H1 (cell line): ENCODE measurements at regions of chr17 and their contacts with region 1.

Region 1: GRCh38 chr17:38421171-38421841 is 7.0 kb upstream of the ARHGAP23 start:
- DNase-seq: no peak
- H3K4me3 ChIP-seq: peak overlapping the region in 1 of 4 experiments; percentile 4; a peak in 2 of 8 replicates
- H3K27ac ChIP-seq: no peak overlapping the region
- H3K4me1 ChIP-seq: peaks cover 21 to 64% (median 52%) of the 10 kb centered on the region in 4 experiments
- H3K27me3 ChIP-seq: peaks cover 0 to 19% (median 7%) of the 10 kb centered on the region in 4 experiments; a peak in 4 of 7 replicates
- CTCF ChIP-seq: no peak
- EP300 ChIP-seq: no peak
- POLR2A ChIP-seq: no peak
- RAD21 ChIP-seq: no peak

Region 2: GRCh38 chr17:38434178-38434665 is 12.9 kb after region 1 on chr17:
- CTCF ChIA-PET with region 1: interaction called, 204 read pairs
- POLR2A ChIA-PET with region 1: interaction called, 10 read pairs
- DNase-seq: no peak
- H3K4me3 ChIP-seq: no peak overlapping the region
- H3K27ac ChIP-seq: no peak overlapping the region
- H3K4me1 ChIP-seq: peaks cover 9 to 23% (median 14%) of the 10 kb centered on the region in 4 experiments
- H3K27me3 ChIP-seq: no peaks in the 10 kb centered on the region
- CTCF ChIP-seq: no peak
- EP300 ChIP-seq: no peak
- POLR2A ChIP-seq: no peak
- RAD21 ChIP-seq: no peak

Region 3: DNA sequence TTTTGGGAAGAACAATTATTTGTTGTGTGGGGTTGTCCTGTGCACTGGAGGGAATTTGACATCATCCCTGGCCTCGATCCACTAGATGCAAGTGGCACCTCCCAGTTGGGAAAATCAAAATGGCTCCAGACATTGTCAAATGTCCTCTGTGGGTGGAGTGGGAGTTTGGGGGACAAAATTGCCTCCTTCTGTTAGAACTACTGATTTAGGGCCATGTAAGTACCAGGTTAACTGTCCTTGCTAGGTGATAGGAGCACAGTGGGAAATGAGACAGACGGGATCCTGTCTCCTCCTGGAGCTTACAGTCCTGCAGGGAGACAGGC is 63.8 kb after region 1 on chr17:
- CTCF ChIA-PET with region 1: interaction called, 42 read pairs
- POLR2A ChIA-PET with region 1: interaction called, 3 read pairs
- DNase-seq: no peak
- H3K4me3 ChIP-seq: no peak overlapping the region
- H3K27ac ChIP-seq: no peak overlapping the region
- H3K4me1 ChIP-seq: peaks cover 0 to 6% (median 4%) of the 10 kb centered on the region in 4 experiments; a peak in 3 of 7 replicates
- H3K27me3 ChIP-seq: no peaks in the 10 kb centered on the region
- CTCF ChIP-seq: no peak
- EP300 ChIP-seq: no peak
- POLR2A ChIP-seq: no peak
- RAD21 ChIP-seq: no peak

Region 4: DNA sequence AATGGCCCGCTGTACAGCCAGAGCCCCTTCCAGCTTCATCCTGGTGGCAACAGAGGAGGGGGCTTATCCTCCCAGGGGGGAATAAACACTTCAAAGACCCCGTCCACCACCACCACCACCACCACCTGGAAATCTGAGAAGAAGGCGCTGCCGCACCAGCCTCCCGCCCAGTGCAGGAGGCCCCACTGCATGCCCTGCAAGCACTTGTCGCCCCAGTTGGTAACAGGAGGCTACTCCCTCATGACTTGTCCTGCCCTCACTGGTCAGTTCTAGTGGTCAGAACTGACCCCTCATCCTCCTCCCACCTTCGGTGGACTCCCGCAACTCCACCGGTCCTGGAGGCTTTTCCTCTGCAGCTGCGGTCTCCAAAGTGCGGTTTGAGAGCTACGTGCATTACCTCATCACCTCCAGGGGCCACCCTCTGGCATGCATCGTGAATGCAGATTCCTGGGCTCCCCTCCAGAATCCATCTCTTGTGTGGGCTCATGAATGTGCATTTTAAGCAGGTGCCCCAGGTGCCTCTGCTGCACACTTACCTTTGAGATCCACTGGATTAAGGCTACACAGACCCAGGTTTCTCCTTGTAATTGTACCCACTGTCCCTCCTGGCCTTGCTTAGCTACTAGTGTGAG is 112.7 kb after region 1 on chr17:
- CTCF ChIA-PET with region 1: interaction called, 10 read pairs
- POLR2A ChIA-PET with region 1: interaction called, 4 read pairs
- DNase-seq: no peak
- H3K4me3 ChIP-seq: no peak overlapping the region
- H3K27ac ChIP-seq: no peak overlapping the region
- H3K4me1 ChIP-seq: peaks cover 0 to 19% (median 5%) of the 10 kb centered on the region in 4 experiments; a peak in 5 of 7 replicates
- H3K27me3 ChIP-seq: peaks cover 0 to 7% (median 1%) of the 10 kb centered on the region in 4 experiments; a peak in 3 of 7 replicates
- CTCF ChIP-seq: no peak
- EP300 ChIP-seq: no peak
- POLR2A ChIP-seq: no peak
- RAD21 ChIP-seq: no peak